ENCODE measurements at regions of chr12 and their contacts with region 1.

Region 1: GRCh38 chr12:112978163-112979040 is at the start of gene OAS2:
- DNase-seq: peak; percentile 94
- H3K4me3 Mint-ChIP-seq: peak within 1 kb of the TSS; percentile 84
- H3K27ac Mint-ChIP-seq: peak within 1 kb of the TSS; percentile 99
- H3K4me1 Mint-ChIP-seq: peaks cover 52% of the 10 kb centered on the region
- H3K27me3 Mint-ChIP-seq: no peaks in the 10 kb centered on the region
- total RNA-seq, gene OAS2: 294 to 420 TPM

Region 2: GRCh38 chr12:112906712-112907414 is 71.5 kb before region 1 on chr12 and contains the start of gene OAS1:
- CTCF ChIA-PET with region 1: interaction called, 14 read pairs
- POLR2A ChIA-PET with region 1: interaction called, 39 read pairs
- DNase-seq: peak; percentile 75
- H3K4me3 Mint-ChIP-seq: peak within 1 kb of the TSS; percentile 98
- H3K27ac Mint-ChIP-seq: peak within 1 kb of the TSS; percentile 98
- H3K4me1 Mint-ChIP-seq: peaks cover 75% of the 10 kb centered on the region
- H3K27me3 Mint-ChIP-seq: no peaks in the 10 kb centered on the region
- total RNA-seq, gene OAS1: 194 to 197 TPM

Region 3: DNA sequence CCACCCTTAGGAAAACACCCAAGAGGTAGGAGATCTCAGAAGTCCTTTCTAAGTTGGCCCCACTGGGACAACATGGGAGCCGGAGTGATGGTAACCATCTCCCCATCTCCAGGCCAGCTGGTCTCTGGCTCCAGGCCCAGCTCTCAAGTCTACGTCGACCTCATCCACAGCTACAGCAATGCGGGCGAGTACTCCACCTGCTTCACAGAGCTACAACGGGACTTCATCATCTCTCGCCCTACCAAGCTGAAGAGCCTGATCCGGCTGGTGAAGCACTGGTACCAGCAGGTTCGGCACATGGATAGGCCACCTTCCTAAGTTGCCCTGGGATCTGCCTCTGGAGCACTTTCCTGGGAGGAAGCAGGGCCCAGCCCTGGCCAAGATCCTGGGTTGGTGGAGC is 11.1 kb before region 1 on chr12:
- CTCF ChIA-PET with region 1: interaction called, 14 read pairs
- POLR2A ChIA-PET with region 1: interaction called, 3 read pairs
- DNase-seq: no peak
- H3K4me3 Mint-ChIP-seq: no peak overlapping the region
- H3K27ac Mint-ChIP-seq: no peak overlapping the region
- H3K4me1 Mint-ChIP-seq: no peaks in the 10 kb centered on the region
- H3K27me3 Mint-ChIP-seq: no peaks in the 10 kb centered on the region

Region 4: DNA sequence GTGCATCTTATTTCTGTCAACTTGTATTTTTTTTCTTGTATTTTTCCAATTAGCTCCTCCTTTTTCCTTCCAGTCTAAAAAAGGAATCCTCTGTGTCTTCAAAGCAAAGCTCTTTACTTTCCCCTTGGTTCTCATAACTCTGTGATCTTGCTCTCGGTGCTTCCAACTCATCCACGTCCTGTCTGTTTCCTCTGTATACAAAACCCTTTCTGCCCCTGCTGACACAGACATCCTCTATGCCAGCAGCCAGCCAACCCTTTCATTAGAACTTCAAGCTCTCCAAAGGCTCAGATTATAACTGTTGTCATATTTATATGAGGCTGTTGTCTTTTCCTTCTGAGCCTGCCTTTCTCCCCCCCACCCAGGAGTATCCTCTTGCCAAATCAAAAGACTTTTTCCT is 32.3 kb after region 1 on chr12:
- CTCF ChIA-PET with region 1: no interaction called
- POLR2A ChIA-PET with region 1: no interaction called
- DNase-seq: no peak
- H3K4me3 Mint-ChIP-seq: no peak overlapping the region
- H3K27ac Mint-ChIP-seq: no peak overlapping the region
- H3K4me1 Mint-ChIP-seq: no peaks in the 10 kb centered on the region
- H3K27me3 Mint-ChIP-seq: no peaks in the 10 kb centered on the region

Measured in activated CD4-positive, alpha-beta T cell treated with anti-CD3 and anti-CD28 coated beads, Interleukin-2, amount 10 ng/mL, durations not matched to agents 7 days and 5 days (primary cell).